Mammary epithelial cell (primary cell): ENCODE measurements at regions of chr1 and their contacts with region 1.

Region 1: GRCh38 chr1:112501810-112502641 is 6.7 kb upstream of the WNT2B start:
- DNase-seq: peak; percentile 69
- H3K4me3 ChIP-seq: peak overlapping the region; percentile 54 to 57 (median 56)
- H3K27ac ChIP-seq: no peak overlapping the region
- H3K4me1 ChIP-seq: peaks cover 5% of the 10 kb centered on the region
- H3K27me3 ChIP-seq: no peaks in the 10 kb centered on the region
- CTCF ChIP-seq: peak; percentile 33 to 87

Region 2: DNA sequence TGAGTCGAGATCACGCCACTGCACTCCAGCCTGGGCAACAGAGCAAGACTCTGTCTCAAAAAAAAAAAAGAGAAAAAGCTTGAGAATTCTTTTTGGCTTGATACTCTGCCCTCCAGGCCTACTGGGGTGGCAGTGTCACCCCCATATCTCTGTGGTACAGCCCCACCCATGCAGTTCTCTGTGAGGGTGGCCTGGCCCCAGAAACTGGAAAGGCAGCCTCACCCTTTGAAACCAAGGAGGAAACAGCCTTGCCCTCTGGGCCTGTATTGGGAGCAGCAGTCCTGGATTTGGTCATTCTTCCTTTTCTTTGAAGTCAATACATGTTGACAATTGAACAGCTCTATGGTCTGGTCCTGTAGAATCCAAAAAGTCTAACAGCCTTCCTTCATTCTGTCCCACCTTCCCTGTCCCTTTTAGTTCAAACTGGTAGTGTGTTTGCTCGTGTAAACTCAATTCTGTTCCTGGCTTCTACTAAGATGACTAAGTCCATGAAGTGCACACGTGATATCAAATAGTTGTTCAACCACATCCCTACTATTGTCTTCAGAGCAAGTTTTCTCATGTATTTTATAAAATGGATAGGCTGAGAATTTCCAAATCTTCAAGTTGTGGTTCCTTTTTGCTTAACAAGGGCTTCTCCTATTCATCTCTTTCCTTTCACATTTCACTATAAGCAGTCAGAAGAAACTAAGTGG is 103.8 kb after region 1 on chr1:
- CTCF ChIA-PET with region 1: no interaction called
- dilution Hi-C with region 1: no loop called
- in situ Hi-C with region 1: no loop called
- intact Hi-C with region 1: loop called (anchors 2 kb)
- DNase-seq: peak; percentile 88
- H3K4me3 ChIP-seq: no peak overlapping the region
- H3K27ac ChIP-seq: peak overlapping the region; percentile 93
- H3K4me1 ChIP-seq: peaks cover 14% of the 10 kb centered on the region
- H3K27me3 ChIP-seq: no peaks in the 10 kb centered on the region
- CTCF ChIP-seq: no peak

Region 3: GRCh38 chr1:112614460-112615065 is 112.5 kb after region 1 on chr1:
- CTCF ChIA-PET with region 1: no interaction called
- dilution Hi-C with region 1: no loop called
- in situ Hi-C with region 1: no loop called
- intact Hi-C with region 1: loop called (anchors 1 kb)
- DNase-seq: no peak
- H3K4me3 ChIP-seq: no peak overlapping the region
- H3K27ac ChIP-seq: no peak overlapping the region
- H3K4me1 ChIP-seq: peaks cover 14% of the 10 kb centered on the region
- H3K27me3 ChIP-seq: no peaks in the 10 kb centered on the region
- CTCF ChIP-seq: peak; percentile 53 to 68